HEK293T (cell line): ENCODE measurements at regions of chr4 and their contacts with region 1.

Region 1: GRCh38 chr4:139301113-139301820 is at the start of gene NAA15:
- DNase-seq: peak; percentile 93

Region 2: DNA sequence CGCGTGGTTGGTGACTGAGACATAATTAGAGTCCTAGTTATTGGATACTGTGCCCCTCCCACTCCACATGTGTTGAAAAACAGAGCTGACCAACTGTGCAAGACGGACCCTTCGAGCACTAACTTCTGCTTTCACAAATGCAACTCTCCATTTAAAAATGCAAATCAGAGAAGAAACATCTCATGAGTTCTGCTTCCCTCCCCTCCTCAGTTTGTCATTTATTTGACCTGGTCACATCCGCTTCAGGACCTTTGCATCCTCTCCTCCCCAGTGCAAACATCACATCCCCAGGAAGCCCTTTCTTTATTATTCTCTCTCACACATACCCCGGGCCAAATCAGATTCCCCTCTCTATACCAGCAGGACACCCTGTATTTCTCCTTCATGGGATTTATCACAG is 323.7 kb before region 1 on chr4:
- CTCF ChIA-PET with region 1: no interaction called
- POLR2A ChIA-PET with region 1: no interaction called
- DNase-seq: no peak

Region 3: DNA sequence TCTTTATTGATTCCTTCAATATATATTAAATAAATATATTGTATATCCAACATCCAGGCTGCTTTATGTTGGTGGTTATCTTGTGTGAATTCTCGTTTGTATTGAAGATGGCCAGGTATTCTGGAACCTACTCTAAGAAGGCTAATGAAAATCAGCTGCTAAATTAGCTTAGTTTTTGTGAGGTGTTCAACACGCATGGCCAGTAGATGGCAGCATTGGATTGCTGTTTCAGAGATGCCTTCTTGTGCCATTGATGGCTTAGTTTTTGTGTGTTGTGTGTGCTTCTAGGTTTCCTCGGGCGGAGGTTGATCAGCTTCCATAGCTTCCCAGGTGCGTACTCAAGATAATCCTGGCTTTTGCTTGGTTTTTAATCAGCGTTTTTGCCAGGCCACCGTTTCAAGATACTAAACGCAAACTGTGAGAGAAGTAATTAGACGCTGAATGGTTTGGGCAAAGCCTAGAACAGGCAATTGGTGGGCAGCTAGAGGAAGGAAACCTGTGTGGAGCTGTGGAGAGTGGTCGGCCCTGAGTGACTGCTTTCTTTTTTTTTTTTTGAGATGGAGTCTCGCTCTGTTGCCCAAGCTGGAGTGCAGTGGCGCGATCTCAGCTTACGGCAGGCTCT is 270.5 kb before region 1 on chr4:
- CTCF ChIA-PET with region 1: interaction called, 14 read pairs
- POLR2A ChIA-PET with region 1: interaction called, 7 read pairs
- DNase-seq: peak; percentile 79

Region 4: GRCh38 chr4:139227729-139228404 is 73.4 kb before region 1 on chr4:
- CTCF ChIA-PET with region 1: interaction called, 10 read pairs
- POLR2A ChIA-PET with region 1: interaction called, 9 read pairs
- DNase-seq: peak; percentile 16

Region 5: GRCh38 chr4:139312552-139313332 is 11.5 kb after region 1 on chr4:
- CTCF ChIA-PET with region 1: interaction called, 6 read pairs
- POLR2A ChIA-PET with region 1: interaction called, 41 read pairs
- DNase-seq: no peak

Region 6: DNA sequence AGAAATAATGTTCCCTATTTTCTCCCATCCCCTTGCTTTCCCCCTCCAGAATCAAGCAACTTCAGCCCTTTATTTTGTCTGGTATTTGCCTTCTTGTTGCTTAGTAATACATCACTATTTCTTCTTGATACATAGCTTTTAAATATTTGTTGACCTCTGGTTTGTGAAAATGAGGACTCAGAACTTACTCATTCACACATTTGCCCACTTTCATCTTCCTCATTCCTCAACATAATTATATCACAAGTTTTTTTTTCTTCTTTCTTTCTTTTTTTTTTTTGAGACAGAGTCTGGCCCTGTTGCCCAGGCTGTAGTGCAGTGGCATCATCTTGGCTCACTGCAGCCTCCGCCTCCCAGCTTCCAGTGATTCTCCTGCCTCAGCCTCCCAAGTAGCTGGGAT is 29.9 kb after region 1 on chr4:
- CTCF ChIA-PET with region 1: no interaction called
- POLR2A ChIA-PET with region 1: interaction called, 22 read pairs
- DNase-seq: no peak

Region 7: GRCh38 chr4:139441029-139441428 is 139.8 kb after region 1 on chr4:
- CTCF ChIA-PET with region 1: no interaction called
- POLR2A ChIA-PET with region 1: no interaction called
- DNase-seq: no peak

Region 8: GRCh38 chr4:139554893-139555704 is 253.8 kb after region 1 on chr4:
- CTCF ChIA-PET with region 1: no interaction called
- POLR2A ChIA-PET with region 1: interaction called, 10 read pairs
- DNase-seq: peak; percentile 83